ENCODE measurements at regions of chr19 and their contacts with region 1.

Region 1: GRCh38 chr19:58305065-58305931 is at the start of gene ERVK3-1:
- DNase-seq: peak; percentile 97
- H3K4me3 Mint-ChIP-seq: peak within 1 kb of the TSS; percentile 89
- H3K27ac Mint-ChIP-seq: peak within 1 kb of the TSS; percentile 92
- H3K4me1 Mint-ChIP-seq: peaks cover 42% of the 10 kb centered on the region
- H3K27me3 Mint-ChIP-seq: no peaks in the 10 kb centered on the region
- total RNA-seq, gene ERVK3-1: 37.1 to 42.3 TPM

Region 2: GRCh38 chr19:58170860-58171259 is 134.4 kb before region 1 on chr19:
- CTCF ChIA-PET with region 1: no interaction called
- POLR2A ChIA-PET with region 1: no interaction called
- intact Hi-C with region 1: no loop called
- DNase-seq: no peak
- H3K4me3 Mint-ChIP-seq: no peak overlapping the region
- H3K27ac Mint-ChIP-seq: no peak overlapping the region
- H3K4me1 Mint-ChIP-seq: no peaks in the 10 kb centered on the region
- H3K27me3 Mint-ChIP-seq: no peaks in the 10 kb centered on the region

Region 3: DNA sequence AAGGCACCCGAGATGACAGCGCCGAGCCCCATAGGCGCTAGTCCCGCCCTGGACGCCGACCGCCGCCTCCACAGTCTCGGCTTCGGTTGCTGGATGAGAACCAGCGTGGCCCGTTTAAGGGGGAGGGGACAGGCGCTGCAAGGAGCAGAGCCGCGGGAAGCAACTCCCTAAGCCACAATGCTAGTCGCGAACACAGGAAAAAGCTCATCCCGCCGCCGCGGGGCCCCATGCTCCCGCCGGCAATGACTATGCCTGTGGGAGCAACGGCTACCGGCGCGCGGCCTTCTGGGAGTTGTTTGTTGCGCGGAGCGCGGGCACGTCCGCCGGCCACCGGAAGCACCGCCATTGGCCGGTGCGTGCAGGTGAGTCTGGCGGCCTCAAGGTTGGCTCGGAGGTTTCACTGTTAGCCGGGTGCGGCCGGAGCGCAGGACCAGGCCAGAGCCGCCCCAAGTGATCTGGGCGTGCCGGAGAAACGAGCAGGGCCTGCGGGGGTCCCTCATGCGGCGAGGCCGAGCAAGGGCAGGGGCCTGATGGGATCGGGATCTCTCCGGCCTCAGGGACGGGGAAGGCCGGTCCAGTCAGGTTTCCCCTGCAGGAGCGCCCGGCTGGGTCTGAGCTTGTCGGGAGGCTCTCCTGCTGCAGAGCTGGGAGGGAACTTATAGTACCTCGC is 76.6 kb before region 1 on chr19 and contains the start of gene ZNF544:
- CTCF ChIA-PET with region 1: interaction called, 3 read pairs
- POLR2A ChIA-PET with region 1: no interaction called
- intact Hi-C with region 1: loop called (anchors 2 kb)
- DNase-seq: peak; percentile 82
- H3K4me3 Mint-ChIP-seq: peak within 1 kb of the TSS; percentile 95
- H3K27ac Mint-ChIP-seq: peak within 1 kb of the TSS; percentile 92
- H3K4me1 Mint-ChIP-seq: peaks cover 32% of the 10 kb centered on the region
- H3K27me3 Mint-ChIP-seq: no peaks in the 10 kb centered on the region
- total RNA-seq, gene ZNF544: 39.6 to 45.4 TPM

Region 4: DNA sequence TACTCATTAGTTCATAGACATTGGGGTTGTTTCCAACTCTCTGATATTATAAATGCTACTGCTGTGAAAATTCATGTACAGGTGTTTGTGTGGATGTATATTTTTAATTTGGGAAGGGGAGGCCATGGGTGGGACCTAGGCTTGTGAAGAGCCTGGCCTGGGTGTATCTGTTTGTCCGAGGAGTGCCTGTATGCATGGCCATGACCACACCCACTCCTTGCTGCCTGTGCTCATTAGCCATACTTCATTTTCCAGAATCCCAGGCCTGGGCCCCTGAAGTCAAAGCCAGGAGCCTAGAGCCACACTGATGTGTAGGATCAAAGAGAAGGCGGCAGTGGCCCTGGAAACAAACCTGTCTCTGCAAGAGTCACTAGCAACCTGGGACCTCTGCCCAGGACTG is 10.3 kb after region 1 on chr19:
- CTCF ChIA-PET with region 1: no interaction called
- POLR2A ChIA-PET with region 1: no interaction called
- intact Hi-C with region 1: no loop called
- DNase-seq: no peak
- H3K4me3 Mint-ChIP-seq: no peak overlapping the region
- H3K27ac Mint-ChIP-seq: no peak overlapping the region
- H3K4me1 Mint-ChIP-seq: no peaks in the 10 kb centered on the region
- H3K27me3 Mint-ChIP-seq: no peaks in the 10 kb centered on the region

Region 5: DNA sequence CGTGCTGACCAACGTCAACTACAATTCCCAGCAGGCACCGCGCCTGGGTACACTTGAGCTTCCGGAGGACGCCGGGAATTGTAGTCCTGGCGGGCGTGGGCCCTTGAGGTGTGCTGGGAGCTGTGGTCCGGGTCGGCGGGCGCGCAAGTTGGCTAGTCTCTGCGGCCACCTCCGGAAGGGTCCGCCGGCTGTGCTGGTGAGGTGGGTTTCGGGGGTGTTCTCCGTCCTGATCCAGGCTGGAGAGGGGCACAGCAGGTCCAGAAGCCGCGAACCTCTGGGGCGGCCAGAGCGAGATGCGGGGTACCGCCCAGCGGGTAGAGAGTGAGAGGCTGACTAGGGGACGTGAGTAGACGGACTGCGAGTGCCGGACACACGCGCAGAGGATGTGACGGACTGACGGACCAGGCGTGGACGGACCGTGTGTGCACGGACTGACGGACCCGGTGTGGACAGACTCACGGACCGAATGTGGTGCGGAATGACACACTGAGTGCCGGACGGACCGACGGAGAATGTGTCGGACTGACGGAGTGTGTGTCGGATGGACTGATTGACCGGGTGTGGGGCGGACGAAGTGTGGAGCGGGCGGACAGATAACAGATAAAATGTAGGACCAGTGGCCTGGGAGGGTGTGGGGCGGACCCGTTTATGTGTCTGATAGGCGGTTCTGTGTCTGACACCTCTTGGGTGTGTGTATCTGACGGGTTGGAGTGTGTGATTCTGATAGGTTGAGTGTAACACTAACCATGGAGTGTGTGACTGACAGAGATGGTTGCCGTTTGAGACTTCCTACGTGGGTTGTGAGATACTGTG is 21.8 kb after region 1 on chr19 and contains the start of gene ZSCAN22:
- CTCF ChIA-PET with region 1: interaction called, 3 read pairs
- POLR2A ChIA-PET with region 1: no interaction called
- intact Hi-C with region 1: loop called (anchors 1 kb)
- DNase-seq: peak; percentile 95
- H3K4me3 Mint-ChIP-seq: no peak within 1 kb of the TSS
- H3K27ac Mint-ChIP-seq: no peak within 1 kb of the TSS
- H3K4me1 Mint-ChIP-seq: peaks cover 4% of the 10 kb centered on the region
- H3K27me3 Mint-ChIP-seq: no peaks in the 10 kb centered on the region
- total RNA-seq, gene ZSCAN22: 3.1 to 3.3 TPM

Region 6: DNA sequence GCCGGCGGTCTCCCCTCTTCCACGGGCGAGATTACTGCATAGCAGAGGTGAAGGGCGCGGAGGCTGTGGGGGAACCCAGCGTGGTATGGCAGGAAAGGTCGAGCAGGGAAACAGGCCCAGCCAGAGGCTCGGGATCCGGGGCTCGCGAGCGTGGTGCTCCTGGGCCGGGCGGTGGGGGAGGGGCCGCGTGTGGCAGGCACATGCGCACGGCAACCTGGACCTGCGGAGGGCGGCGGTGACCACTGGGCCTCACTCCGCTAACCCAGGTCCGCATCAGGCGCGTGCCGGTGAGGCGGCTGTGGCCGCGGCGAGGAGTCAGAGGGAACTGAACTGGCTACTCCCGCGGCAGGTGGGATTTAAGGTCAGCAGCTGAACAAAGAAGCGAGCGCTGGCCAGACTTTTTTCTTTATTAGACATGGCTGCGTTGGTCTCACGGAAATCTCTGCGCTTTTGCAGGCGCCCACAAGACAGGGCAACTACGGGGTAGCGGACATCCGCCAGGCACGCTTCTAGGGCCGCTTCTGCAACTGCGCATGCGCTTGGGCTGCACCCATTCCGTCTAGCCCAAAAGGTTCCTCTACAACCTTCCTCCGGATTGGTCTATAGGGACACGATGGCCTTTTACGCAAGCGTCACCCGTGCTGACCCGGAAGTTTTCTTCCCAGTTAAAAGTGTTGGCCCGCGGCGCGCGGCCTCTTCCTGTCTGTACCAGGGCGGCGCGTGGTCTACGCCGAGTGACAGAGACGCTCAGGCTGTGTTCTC is 81.5 kb after region 1 on chr19 and contains the start of gene RPS5:
- CTCF ChIA-PET with region 1: no interaction called
- POLR2A ChIA-PET with region 1: no interaction called
- intact Hi-C with region 1: loop called (anchors 1 kb)
- DNase-seq: peak; percentile 97
- H3K4me3 Mint-ChIP-seq: peak within 1 kb of the TSS; percentile 94
- H3K27ac Mint-ChIP-seq: peak within 1 kb of the TSS; percentile 95
- H3K4me1 Mint-ChIP-seq: peaks cover 44% of the 10 kb centered on the region
- H3K27me3 Mint-ChIP-seq: no peaks in the 10 kb centered on the region
- total RNA-seq, gene RPS5: 1,415 to 1,438 TPM

Region 7: DNA sequence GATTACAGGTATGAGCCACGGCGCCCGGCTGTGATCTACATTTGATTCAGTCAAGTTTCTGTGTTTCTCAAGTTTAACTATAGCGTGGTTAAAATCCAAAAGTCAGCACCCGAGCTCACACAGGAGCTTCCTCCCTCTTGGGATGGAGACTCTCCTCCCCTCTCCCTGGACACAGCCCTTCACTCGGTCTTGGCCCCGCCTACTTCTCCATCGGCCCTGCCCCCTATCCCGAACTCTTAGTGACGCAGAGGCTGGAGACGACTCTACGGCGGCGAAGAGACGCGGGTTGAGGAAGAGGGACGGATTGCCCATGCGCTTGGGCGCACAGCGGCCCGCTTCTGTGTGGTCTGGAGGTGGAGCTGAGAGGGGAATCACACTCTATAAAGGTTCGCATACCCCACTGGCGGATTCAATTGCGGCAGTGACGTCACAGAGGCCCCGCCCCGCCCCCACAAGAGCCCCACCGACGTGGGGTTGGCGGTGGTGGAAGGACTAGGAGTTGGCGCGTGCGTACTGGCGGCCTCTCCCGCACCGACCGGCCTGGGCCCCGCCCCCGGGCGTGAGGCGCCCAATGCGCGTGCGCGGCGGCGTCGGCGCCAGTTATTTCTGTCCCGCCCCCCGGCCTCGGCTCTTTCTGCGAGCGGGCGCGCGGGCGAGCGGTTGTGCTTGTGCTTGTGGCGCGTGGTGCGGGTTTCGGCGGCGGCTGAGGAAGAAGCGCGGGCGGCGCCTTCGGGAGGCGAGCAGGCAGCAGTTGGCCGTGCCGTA is 238.7 kb after region 1 on chr19 and contains the start of gene TRIM28:
- CTCF ChIA-PET with region 1: no interaction called
- POLR2A ChIA-PET with region 1: no interaction called
- intact Hi-C with region 1: loop called (anchors 1 kb)
- DNase-seq: peak; percentile 100
- H3K4me3 Mint-ChIP-seq: peak within 1 kb of the TSS; percentile 97
- H3K27ac Mint-ChIP-seq: peak within 1 kb of the TSS; percentile 95
- H3K4me1 Mint-ChIP-seq: peaks cover 32% of the 10 kb centered on the region
- H3K27me3 Mint-ChIP-seq: peaks cover 7% of the 10 kb centered on the region
- total RNA-seq, gene TRIM28: 404 to 408 TPM